Esophagus squamous epithelium (tissue), 5 donors: ENCODE measurements at regions of chr17 and their contacts with region 1.

Region 1: DNA sequence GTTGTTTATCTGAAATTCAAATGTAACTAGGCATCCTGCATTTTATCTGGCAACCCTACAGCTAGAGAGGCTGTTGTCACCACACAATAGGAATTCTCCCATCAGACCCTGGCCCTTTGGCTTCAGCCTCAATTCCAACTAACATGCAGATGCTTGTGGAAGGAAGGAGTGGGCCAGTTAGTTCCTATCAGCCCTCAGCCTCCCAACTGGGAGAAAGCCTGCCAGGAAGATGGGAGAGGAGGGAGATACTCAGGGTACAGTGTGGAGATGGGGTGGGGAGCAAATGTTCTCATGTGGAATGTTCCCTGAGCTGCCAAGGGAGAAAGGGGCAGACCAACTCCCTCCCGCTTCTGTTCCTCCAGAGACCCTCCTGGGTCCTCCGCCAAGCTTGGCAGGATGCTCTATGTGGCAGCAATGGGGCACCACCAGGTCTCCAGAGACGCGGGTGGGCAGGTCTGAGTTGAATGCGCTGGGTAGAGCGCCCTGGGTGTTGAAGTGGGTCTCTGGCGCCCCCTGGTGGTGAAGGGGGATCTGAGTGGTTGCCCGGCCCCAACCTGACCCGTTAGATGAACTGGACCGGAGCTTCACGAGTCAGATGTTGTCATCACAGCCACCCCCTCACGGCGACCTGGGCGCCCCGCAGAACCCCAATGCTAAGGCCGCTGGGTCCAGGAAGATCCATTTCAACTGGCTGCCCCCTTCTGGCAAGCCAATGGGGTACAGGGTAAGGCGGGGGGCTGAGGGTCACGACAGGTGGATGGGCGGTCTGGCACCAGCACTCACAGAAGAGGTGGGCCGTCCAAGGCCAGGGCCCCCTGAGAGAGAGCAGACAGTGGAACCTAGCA is 15.2 kb downstream of the GALK1 start:
- DNase-seq: peak; percentile 48
- H3K4me3 ChIP-seq: no peak overlapping the region
- H3K27ac ChIP-seq: peak overlapping the region in 3 of 4 donors; percentile 2 to 44 (median 26)
- H3K4me1 ChIP-seq: peaks cover 5 to 42% (median 6%) of the 10 kb centered on the region in 3 donors
- H3K27me3 ChIP-seq: no peaks in the 10 kb centered on the region
- CTCF ChIP-seq: peak; percentile 87 to 95 (median 92)
- POLR2A ChIP-seq: no peak

Region 2: GRCh38 chr17:75504347-75504964 is 245.3 kb before region 1 on chr17:
- intact Hi-C with region 1: loop called (anchors 10 kb)
- DNase-seq: no peak
- H3K4me3 ChIP-seq: no peak overlapping the region
- H3K27ac ChIP-seq: peak overlapping the region in 2 of 4 donors; percentile 5 to 17
- H3K4me1 ChIP-seq: peaks cover 0 to 63% (median 7%) of the 10 kb centered on the region in 3 donors
- H3K27me3 ChIP-seq: no peaks in the 10 kb centered on the region
- CTCF ChIP-seq: peak in 5 of 6 experiments; percentile 47 to 72 (median 55)
- POLR2A ChIP-seq: no peak

Region 3: DNA sequence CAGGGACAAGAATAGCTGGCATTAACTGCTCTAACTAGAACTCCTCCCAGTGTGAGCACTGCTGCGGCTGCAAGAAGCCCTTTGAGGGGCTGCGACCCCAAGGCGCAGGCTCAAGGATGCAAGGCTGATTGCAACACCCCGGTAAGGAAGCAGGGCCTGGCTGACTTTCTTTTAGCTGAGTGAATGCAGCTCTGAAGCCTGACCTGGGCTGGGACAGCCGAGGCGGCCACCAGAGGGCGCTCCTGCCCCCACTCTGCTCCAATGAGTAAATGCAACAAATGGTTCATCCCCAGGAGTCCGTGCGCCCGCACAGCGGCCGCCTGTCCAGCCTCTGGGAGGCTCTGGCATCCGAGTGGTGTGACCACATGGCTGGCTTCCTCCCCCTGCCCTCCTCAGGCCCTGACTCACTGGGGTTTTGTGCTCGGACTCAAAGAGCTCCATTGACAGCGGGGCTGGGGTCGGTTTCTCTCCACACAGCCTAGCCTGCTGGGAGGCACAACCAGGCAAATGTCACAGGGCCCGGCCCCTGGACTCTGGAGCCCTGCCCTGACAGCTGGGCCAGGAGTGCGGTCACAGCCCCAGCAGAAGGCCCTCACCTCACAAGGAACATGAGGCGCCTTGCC is 116.8 kb before region 1 on chr17 and contains the start of gene SMIM5:
- intact Hi-C with region 1: loop called (anchors 5 kb)
- DNase-seq: peak; percentile 25
- H3K4me3 ChIP-seq: peak within 1 kb of the TSS in 3 of 4 donors; percentile 15 to 37 (median 21)
- H3K27ac ChIP-seq: peak within 1 kb of the TSS; percentile 71 to 84 (median 80)
- H3K4me1 ChIP-seq: peaks cover 16 to 37% (median 20%) of the 10 kb centered on the region in 3 donors
- H3K27me3 ChIP-seq: no peaks in the 10 kb centered on the region
- CTCF ChIP-seq: peak; percentile 93 to 99 (median 96)
- POLR2A ChIP-seq: no peak
- total RNA-seq, gene SMIM5: 7.4 to 16.8 (median 8.6) TPM

Region 4: DNA sequence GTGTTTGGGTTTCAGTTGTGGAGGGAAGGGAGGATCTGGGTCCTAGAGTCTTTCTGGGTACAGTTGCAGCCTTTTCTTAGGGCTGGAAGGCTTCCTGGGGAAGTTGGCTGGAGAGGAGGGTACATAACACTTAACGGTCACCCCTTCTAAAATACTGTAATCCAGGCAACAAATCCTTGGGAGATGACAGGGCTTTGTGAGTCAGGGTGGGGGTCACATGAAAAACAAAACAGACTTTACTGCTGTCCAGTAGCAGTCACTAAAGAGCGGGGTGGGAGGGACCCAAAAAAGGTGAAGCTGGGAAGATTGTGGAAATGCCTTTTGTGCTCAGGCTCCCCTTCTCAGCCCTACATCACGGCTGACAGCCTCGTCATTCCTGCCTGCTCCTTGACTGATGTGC is 76.3 kb before region 1 on chr17:
- intact Hi-C with region 1: loop called (anchors 5 kb)
- DNase-seq: no peak
- H3K4me3 ChIP-seq: no peak overlapping the region
- H3K27ac ChIP-seq: no peak overlapping the region
- H3K4me1 ChIP-seq: peaks cover 5 to 36% (median 5%) of the 10 kb centered on the region in 3 donors
- H3K27me3 ChIP-seq: no peaks in the 10 kb centered on the region
- CTCF ChIP-seq: no peak
- POLR2A ChIP-seq: no peak